Body of pancreas (tissue), 4 donors: ENCODE measurements at regions of chr3 and their contacts with region 1.

Region 1: GRCh38 chr3:194472290-194472920 is 14.4 kb downstream of the ATP13A3 start:
- DNase-seq: peak in 3 of 4 donors; percentile 38 to 71 (median 51)
- ATAC-seq: peak; percentile 81
- H3K4me3 ChIP-seq: no peak overlapping the region
- H3K27ac ChIP-seq: no peak overlapping the region
- H3K4me1 ChIP-seq: peaks cover 18% of the 10 kb centered on the region
- H3K27me3 ChIP-seq: no peaks in the 10 kb centered on the region
- CTCF ChIP-seq: peak; percentile 83 to 95 (median 92)
- POLR2A ChIP-seq: no peak

Region 2: DNA sequence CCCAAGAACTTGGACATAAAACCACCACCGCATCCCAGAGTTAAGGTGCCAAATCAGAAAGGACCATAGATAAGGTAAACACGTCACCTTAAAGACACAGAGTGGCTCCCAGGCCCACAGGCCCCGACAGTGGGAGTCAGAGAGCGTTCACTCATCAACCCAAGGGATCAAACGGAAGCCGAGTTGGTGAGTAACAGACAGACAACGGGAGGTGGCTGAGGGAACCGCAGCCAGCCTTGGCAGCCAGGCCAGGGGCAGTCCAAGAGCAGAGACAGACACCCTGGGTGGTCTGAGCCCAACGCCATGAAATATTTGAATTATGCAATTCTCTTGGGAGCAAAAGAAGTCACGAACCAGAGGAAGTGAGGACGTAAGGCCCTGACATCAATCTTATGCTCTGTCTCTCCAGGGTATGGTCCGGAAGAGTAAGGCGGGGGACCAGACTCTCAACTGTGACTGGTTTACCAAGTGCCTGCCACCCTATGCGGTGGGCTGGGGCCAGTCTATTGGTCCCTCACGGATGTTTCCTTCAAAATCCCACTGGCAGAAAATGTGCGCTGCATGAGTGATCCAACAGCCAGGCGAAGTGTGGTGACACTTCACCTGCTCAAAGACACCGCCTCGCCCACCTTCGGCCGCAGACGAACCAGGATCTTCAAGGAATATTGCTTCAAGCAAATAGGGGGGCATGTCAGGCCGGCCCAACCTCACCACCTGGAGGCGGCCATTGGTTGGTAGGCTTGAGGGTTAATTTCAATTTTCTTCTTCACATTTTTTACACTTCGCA is 126.6 kb after region 1 on chr3:
- intact Hi-C with region 1: loop called (anchors 5 kb)
- DNase-seq: no peak
- ATAC-seq: no peak
- H3K4me3 ChIP-seq: no peak overlapping the region
- H3K27ac ChIP-seq: no peak overlapping the region
- H3K4me1 ChIP-seq: no peaks in the 10 kb centered on the region
- H3K27me3 ChIP-seq: no peaks in the 10 kb centered on the region
- CTCF ChIP-seq: no peak
- POLR2A ChIP-seq: no peak